ENCODE measurements at regions of chr3 and their contacts with region 1.

Region 1: DNA sequence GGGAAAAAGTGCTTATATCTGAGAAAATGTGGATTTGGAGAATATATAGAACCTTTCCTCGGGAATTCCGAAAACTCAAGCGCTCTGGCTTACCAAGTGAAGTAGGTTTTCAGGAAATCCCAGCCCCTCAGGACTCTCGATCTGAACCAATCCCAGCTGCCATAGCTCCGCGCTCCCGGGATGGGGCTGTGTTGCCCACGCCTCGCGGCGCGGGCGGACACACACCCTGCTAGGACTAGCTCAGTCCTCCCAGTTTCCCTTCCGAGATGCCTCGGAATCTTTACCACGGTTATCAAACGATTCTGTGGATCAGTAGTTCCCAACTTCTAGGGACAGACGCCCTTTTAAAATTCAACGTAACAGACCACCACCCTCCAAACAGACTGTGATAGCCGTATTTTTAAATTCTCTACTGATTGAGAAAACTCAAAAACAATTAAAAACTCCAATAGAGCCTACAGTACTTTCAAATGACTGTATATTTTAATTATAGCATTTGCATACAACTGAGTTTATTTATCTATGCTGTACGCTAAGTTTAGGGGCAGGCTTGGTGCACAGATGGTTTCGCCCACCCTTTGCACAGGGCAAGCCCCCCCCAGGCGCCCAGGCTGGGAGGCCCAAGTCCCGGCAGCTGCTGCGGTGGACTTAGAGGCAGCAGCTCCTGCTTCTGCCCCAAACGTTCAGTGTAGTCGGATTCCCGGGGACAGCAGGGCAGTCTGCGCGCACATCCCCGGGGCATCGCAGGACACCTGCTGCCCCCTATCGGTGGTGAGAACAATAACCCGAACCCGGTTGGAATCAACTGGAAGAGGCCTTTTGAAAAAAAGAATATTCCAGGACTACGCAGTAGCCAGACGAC is 52.3 kb downstream of the CCDC54 start:
- DNase-seq: peak; percentile 83 to 89 (median 86)
- H3K4me3 ChIP-seq: peak overlapping the region in 3 of 4 donors; percentile 37 to 87 (median 75)
- H3K27ac ChIP-seq: peak overlapping the region; percentile 57 to 99 (median 93)
- H3K4me1 ChIP-seq: peaks cover 6 to 13% of the 10 kb centered on the region in 2 donors
- H3K27me3 ChIP-seq: no peaks in the 10 kb centered on the region
- CTCF ChIP-seq: peak; percentile 87 to 94 (median 88)
- POLR2A ChIP-seq: peak; percentile 27 to 87

Region 2: GRCh38 chr3:107235928-107236315 is 193.6 kb before region 1 on chr3:
- intact Hi-C with region 1: loop called in 1 of 2 experiments (anchors 10 kb)
- DNase-seq: peak; percentile 39 to 74 (median 65)
- H3K4me3 ChIP-seq: peak overlapping the region; percentile 14 to 69 (median 21)
- H3K27ac ChIP-seq: peak overlapping the region in 4 of 5 donors; percentile 67 to 80 (median 74)
- H3K4me1 ChIP-seq: peaks cover 11 to 22% of the 10 kb centered on the region in 2 donors
- H3K27me3 ChIP-seq: no peaks in the 10 kb centered on the region
- CTCF ChIP-seq: peak; percentile 88 to 99 (median 96)
- POLR2A ChIP-seq: peak in 1 of 2 donors; percentile 54

Region 3: DNA sequence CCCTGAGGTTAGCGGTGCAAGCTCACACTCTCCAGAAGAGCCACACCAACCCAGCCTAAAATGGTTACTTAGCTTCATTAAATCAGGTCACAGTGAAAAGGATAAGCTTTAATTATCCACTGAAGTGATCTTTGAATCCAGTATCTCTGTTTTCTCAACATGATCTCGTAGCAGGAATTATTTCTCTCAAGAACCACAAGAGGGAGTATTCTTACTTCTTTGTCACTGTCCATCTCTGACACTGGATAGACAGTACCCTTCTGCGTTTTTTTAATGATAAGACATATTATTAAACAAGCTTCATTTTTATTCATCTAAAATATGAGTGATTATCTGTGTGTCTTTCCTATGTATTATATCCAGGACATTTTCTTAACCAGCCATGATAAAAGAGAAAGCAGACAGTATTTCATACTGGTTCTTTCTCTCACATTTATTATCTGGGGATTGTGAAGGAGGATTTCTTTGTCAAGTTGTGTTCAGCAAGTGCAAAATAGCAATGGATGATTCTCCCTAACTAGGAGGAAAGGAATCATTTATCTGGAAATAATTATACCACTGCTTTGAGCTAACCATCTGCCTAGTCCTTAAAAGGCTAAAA is 157.7 kb before region 1 on chr3:
- intact Hi-C with region 1: loop called (anchors 5 to 10 kb)
- DNase-seq: no peak
- H3K4me3 ChIP-seq: no peak overlapping the region
- H3K27ac ChIP-seq: no peak overlapping the region
- H3K4me1 ChIP-seq: peaks cover 7 to 8% of the 10 kb centered on the region in 2 donors
- H3K27me3 ChIP-seq: no peaks in the 10 kb centered on the region
- CTCF ChIP-seq: peak; percentile 47 to 80 (median 72)
- POLR2A ChIP-seq: no peak

Region 4: DNA sequence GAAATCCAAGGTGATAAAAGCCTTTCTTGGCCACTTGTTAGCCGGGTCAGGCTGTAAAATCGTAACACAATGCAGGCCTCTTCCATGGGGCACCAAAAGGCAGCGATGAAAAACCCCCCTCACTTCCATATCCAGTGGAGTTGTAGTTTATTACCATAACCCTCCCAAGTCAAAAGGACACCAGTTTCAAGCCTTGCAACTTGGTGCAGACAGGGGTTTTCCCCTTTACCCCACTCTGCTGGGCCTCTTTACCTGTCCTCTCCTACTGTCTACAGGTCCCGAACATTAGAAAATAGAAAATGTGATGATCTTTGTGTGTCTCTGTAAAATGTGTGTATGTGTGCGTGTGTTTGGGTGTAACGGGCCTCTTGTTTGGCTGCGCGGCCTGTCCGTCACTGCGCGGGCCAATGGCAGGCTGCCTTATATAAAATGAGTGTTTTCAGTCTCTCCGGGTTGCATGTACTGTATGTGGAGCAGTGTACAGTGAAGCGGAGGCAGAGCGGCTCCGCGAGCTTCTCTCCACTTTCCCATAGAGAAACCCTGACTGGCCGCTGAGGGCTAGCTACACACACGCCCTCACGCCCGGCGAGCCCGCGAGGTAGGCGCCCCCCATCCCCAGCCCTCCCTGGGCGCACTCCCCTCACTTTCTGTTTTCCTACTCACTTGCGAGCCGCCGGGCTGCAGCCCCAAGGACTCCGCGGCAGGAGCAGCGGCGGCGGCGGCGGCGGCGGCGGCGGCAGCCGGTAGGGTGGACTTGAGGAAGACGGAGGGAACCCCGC is 93.1 kb after region 1 on chr3 and contains the start of gene BBX:
- intact Hi-C with region 1: loop called in 1 of 2 experiments (anchors 5 kb)
- DNase-seq: peak; percentile 90 to 99 (median 95)
- H3K4me3 ChIP-seq: peak within 1 kb of the TSS; percentile 53 to 96 (median 92)
- H3K27ac ChIP-seq: peak within 1 kb of the TSS; percentile 90 to 94 (median 93)
- H3K4me1 ChIP-seq: peaks cover 10 to 25% of the 10 kb centered on the region in 2 donors
- H3K27me3 ChIP-seq: no peaks in the 10 kb centered on the region
- CTCF ChIP-seq: peak in 1 of 6 experiments; percentile 12
- POLR2A ChIP-seq: peak; percentile 53 to 96
- total RNA-seq, gene BBX: 87.5 to 208 (median 123) TPM

Measured in adrenal gland (tissue), 19 donors.